CD4-positive, alpha-beta T cell (primary cell): ENCODE measurements at regions of chr7 and their contacts with region 1.

Region 1: DNA sequence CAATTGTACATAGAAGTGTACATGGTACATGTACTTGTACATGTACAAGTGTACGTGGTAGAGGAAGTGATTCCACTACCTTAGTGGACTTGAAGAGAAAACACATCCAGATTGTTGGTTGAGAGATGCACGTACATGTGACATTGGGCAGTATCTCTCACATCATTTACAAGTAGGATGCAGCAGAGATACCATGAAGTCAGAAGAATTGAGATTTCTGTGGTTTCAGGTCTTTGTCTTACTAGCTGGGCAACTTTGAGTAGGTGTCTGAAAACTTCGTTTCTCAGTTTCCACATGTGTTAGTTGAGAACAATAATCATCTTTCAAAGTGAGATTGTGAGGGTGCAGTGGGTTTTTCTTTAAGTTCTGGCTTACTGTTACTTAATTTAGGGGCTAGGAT is 21.5 kb downstream of the CLDN12 start:
- DNase-seq: no peak
- ATAC-seq: no peak
- H3K4me3 ChIP-seq: no peak overlapping the region
- H3K4me3 Mint-ChIP-seq: no peak overlapping the region
- H3K27ac ChIP-seq: no peak overlapping the region
- H3K27ac Mint-ChIP-seq: no peak overlapping the region
- H3K4me1 ChIP-seq: no peaks in the 10 kb centered on the region
- H3K4me1 Mint-ChIP-seq: no peaks in the 10 kb centered on the region
- H3K27me3 ChIP-seq: no peaks in the 10 kb centered on the region
- H3K27me3 Mint-ChIP-seq: peaks cover 6% of the 10 kb centered on the region
- CTCF ChIP-seq: no peak

Region 2: DNA sequence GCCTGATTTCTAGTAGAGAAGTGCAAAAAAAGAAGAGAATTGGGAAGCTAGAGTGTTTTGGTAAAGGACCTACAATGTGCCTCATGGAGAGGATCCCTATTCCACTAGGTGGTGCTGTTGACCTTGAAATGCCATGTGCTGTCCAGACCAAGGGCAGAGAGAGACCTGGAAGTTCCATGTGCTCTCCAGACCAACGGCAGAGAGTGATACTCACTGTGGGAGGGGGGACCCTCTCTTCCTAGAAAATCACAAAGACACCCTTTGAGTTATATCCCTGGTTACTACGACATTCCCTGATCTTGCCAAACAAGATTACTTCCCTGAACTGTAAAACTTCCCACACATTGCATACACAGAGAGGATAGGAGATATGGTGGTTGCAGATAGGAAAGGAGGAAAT is 1877.9 kb before region 1 on chr7:
- CTCF ChIA-PET with region 1: no interaction called
- POLR2A ChIA-PET with region 1: no interaction called
- intact Hi-C with region 1: loop called in 1 of 2 experiments (anchors 5 kb)
- DNase-seq: peak in 4 of 14 experiments; percentile 4 to 23 (median 10)
- ATAC-seq: no peak
- H3K4me3 ChIP-seq: no peak overlapping the region
- H3K4me3 Mint-ChIP-seq: no peak overlapping the region
- H3K27ac ChIP-seq: no peak overlapping the region
- H3K27ac Mint-ChIP-seq: no peak overlapping the region
- H3K4me1 ChIP-seq: no peaks in the 10 kb centered on the region
- H3K4me1 Mint-ChIP-seq: no peaks in the 10 kb centered on the region
- H3K27me3 ChIP-seq: no peaks in the 10 kb centered on the region
- H3K27me3 Mint-ChIP-seq: no peaks in the 10 kb centered on the region
- CTCF ChIP-seq: no peak

Region 3: DNA sequence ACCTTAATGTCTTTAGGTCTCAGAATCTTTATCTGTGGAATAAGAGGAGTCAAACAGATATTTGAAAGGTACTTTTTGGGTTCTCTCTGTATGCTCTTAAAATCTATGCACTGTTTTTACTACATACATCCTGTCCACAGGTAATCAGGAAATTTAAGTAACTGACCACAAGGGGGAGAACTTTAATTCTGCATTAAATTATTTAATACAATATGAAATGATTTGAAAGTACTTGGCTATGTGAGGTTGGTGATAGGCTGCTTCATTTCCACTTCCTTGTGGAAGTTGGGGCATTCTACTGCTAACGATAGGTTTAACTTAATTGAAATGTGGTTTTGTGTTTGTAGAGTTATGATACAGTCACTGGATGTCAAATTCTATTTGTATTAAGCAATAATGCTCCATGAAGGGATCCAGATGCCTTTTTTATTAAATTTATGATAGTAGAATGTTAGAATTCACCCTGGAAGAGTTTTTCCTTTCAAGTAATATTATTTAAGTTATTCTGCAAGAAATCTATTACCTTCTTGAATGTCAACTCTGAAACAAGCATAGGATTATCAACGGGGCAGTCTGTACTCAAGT is 1635.1 kb before region 1 on chr7:
- CTCF ChIA-PET with region 1: no interaction called
- POLR2A ChIA-PET with region 1: no interaction called
- intact Hi-C with region 1: loop called (anchors 2 kb)
- DNase-seq: peak in 3 of 14 experiments; percentile 18 to 30 (median 27)
- ATAC-seq: no peak
- H3K4me3 ChIP-seq: no peak overlapping the region
- H3K4me3 Mint-ChIP-seq: no peak overlapping the region
- H3K27ac ChIP-seq: no peak overlapping the region
- H3K27ac Mint-ChIP-seq: no peak overlapping the region
- H3K4me1 ChIP-seq: no peaks in the 10 kb centered on the region
- H3K4me1 Mint-ChIP-seq: no peaks in the 10 kb centered on the region
- H3K27me3 ChIP-seq: no peaks in the 10 kb centered on the region
- H3K27me3 Mint-ChIP-seq: no peaks in the 10 kb centered on the region
- CTCF ChIP-seq: peak; percentile 57

Region 4: GRCh38 chr7:90155206-90155605 is 269.5 kb before region 1 on chr7:
- CTCF ChIA-PET with region 1: interaction called, 33 read pairs
- POLR2A ChIA-PET with region 1: interaction called, 6 read pairs
- intact Hi-C with region 1: loop called (anchors 1 kb)
- DNase-seq: no peak
- ATAC-seq: no peak
- H3K4me3 ChIP-seq: no peak overlapping the region
- H3K4me3 Mint-ChIP-seq: no peak overlapping the region
- H3K27ac ChIP-seq: no peak overlapping the region
- H3K27ac Mint-ChIP-seq: no peak overlapping the region
- H3K4me1 ChIP-seq: peaks cover 9% of the 10 kb centered on the region
- H3K4me1 Mint-ChIP-seq: peaks cover 4% of the 10 kb centered on the region
- H3K27me3 ChIP-seq: peaks cover 0 to 7% of the 10 kb centered on the region in 2 experiments
- H3K27me3 Mint-ChIP-seq: peaks cover 47% of the 10 kb centered on the region
- CTCF ChIP-seq: no peak

Region 5: DNA sequence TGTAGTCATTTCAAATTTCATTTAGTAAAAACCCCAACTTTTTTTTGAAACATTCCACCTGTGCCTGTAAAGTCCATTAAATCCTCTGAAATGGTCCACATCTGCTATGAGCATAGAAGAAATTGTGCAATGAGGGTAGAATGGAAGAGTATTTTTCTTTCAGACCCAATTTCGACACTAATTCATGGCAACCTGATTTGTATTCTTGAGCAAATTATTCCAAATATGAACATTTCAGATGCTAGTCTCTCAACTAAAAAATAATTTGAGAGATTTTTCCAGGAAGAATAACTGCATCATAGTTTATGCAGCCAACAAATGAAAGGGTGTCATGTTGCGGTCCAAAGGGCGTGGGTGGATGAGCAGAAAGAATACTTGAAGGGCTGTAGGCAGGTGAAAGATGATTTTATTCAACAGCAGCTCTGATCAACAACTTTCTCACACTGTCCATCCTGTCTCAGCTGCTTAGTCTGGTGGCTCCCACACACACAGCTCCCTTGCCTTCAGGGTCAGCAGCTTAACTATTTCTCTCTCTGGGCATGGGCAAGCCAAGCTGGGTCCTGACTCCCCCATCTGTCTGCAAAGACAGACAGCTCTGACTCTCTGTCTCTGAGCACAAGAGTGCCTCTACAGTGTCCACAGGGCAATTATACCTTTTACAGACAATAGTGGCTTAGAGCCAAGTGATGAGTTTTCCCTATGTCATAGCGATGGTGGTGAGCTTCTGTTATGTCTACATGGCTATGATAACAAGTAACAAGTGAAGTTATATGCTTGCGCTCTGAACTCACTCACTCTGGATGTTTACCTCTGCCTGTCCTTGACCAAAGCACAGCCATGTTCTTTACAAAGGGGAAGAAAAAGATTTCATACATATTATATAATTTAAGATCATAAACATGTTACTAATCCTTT is 201.7 kb before region 1 on chr7:
- CTCF ChIA-PET with region 1: no interaction called
- POLR2A ChIA-PET with region 1: no interaction called
- intact Hi-C with region 1: no loop called
- DNase-seq: no peak
- ATAC-seq: no peak
- H3K4me3 ChIP-seq: no peak overlapping the region
- H3K4me3 Mint-ChIP-seq: no peak overlapping the region
- H3K27ac ChIP-seq: no peak overlapping the region
- H3K27ac Mint-ChIP-seq: no peak overlapping the region
- H3K4me1 ChIP-seq: no peaks in the 10 kb centered on the region
- H3K4me1 Mint-ChIP-seq: no peaks in the 10 kb centered on the region
- H3K27me3 ChIP-seq: peaks cover 0 to 23% of the 10 kb centered on the region in 2 experiments
- H3K27me3 Mint-ChIP-seq: peaks cover 63% of the 10 kb centered on the region
- CTCF ChIP-seq: no peak

Region 6: GRCh38 chr7:90312745-90313144 is 112.0 kb before region 1 on chr7:
- CTCF ChIA-PET with region 1: interaction called, 9 read pairs
- POLR2A ChIA-PET with region 1: interaction called, 4 read pairs
- intact Hi-C with region 1: loop called (anchors 1 to 5 kb)
- DNase-seq: peak in 3 of 14 experiments; percentile 5 to 19 (median 15)
- ATAC-seq: peak; percentile 34
- H3K4me3 ChIP-seq: no peak overlapping the region
- H3K4me3 Mint-ChIP-seq: no peak overlapping the region
- H3K27ac ChIP-seq: no peak overlapping the region
- H3K27ac Mint-ChIP-seq: no peak overlapping the region
- H3K4me1 ChIP-seq: no peaks in the 10 kb centered on the region
- H3K4me1 Mint-ChIP-seq: no peaks in the 10 kb centered on the region
- H3K27me3 ChIP-seq: peaks cover 0 to 6% of the 10 kb centered on the region in 2 experiments
- H3K27me3 Mint-ChIP-seq: peaks cover 48% of the 10 kb centered on the region
- CTCF ChIP-seq: no peak

Region 7: DNA sequence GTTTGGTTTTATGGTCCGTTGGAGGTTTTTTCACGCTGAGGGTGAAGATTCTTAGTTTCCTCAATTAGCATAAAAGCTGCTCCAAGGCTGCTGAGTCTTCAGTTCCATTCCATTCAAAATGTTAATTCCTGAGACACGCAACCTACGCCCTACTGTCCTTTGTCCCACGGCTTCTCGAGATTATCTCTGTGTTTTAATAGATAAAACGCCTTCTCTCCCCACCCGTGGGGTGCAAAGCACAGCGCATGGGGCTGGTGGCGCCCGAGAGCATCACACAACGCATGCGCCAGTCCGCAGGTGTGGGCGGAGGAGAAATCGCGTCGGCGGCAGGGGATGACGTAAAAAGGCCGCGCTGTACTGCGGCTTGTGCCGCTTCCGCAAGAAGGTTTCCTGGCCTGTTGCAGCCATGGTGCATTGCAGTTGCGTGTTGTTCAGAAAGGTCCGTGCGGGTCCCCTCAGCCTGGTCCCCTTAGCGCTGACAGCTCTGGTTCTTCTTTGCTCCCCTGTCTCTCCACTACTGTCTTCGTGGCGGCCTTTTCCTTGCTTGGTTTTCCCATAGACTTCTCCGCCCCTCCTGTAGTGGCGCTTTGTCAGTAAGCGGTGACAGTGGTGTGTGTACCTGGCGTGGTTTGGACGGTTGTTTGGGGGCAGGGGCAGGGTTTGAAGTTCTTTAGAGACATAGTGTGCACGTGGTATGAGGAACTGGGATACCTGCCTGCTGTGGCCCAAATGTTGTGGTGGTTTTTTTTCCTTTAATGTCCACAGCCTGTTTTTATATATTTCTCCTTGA is 78.2 kb before region 1 on chr7 and contains the start of gene GTPBP10:
- CTCF ChIA-PET with region 1: interaction called, 3 read pairs
- POLR2A ChIA-PET with region 1: no interaction called
- intact Hi-C with region 1: loop called in 1 of 2 experiments (anchors 1 kb)
- DNase-seq: peak; percentile 92 to 99 (median 93)
- ATAC-seq: peak; percentile 91
- H3K4me3 ChIP-seq: peak within 1 kb of the TSS; percentile 66
- H3K4me3 Mint-ChIP-seq: peak within 1 kb of the TSS; percentile 98
- H3K27ac ChIP-seq: peak within 1 kb of the TSS; percentile 81 to 86
- H3K27ac Mint-ChIP-seq: peak within 1 kb of the TSS; percentile 99
- H3K4me1 ChIP-seq: peaks cover 14% of the 10 kb centered on the region
- H3K4me1 Mint-ChIP-seq: peaks cover 61% of the 10 kb centered on the region
- H3K27me3 ChIP-seq: no peaks in the 10 kb centered on the region
- H3K27me3 Mint-ChIP-seq: no peaks in the 10 kb centered on the region
- CTCF ChIP-seq: peak; percentile 86
- total RNA-seq, gene GTPBP10: 11.8 to 13.7 TPM

Region 8: GRCh38 chr7:90445633-90446032 is 20.9 kb after region 1 on chr7:
- CTCF ChIA-PET with region 1: no interaction called
- POLR2A ChIA-PET with region 1: no interaction called
- intact Hi-C with region 1: no loop called
- DNase-seq: no peak
- ATAC-seq: no peak
- H3K4me3 ChIP-seq: no peak overlapping the region
- H3K4me3 Mint-ChIP-seq: no peak overlapping the region
- H3K27ac ChIP-seq: no peak overlapping the region
- H3K27ac Mint-ChIP-seq: no peak overlapping the region
- H3K4me1 ChIP-seq: no peaks in the 10 kb centered on the region
- H3K4me1 Mint-ChIP-seq: no peaks in the 10 kb centered on the region
- H3K27me3 ChIP-seq: no peaks in the 10 kb centered on the region
- H3K27me3 Mint-ChIP-seq: peaks cover 6% of the 10 kb centered on the region
- CTCF ChIP-seq: no peak

Region 9: DNA sequence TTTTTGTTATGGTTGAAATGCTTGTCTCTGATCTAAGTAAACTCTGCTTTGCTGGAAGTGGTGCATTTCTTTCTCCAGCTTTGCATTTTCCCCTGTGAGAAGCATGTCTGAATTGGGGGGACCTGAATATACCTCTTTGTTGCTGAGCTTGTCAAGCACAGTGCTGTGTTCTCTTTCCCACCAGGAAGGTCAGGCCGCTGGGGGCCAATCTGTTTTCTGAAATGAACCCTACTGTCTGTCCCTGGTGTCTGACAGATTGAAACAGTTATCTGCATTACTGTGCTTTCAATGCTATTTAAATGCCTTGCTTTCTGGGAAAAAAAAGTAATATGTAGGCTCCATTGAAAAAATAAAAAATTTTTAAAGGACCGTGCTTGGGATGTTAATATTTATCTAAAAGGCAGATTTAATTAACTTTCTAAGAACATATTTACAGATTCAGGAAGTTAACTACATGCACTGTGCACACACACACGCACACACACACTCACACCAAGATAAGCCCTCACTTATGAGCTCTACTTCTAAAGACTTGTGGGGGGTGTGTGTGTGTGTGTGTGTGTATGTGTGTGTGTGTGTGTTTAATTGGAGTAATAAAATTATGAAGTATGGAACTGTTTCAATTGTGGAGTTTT is 712.5 kb after region 1 on chr7:
- CTCF ChIA-PET with region 1: no interaction called
- POLR2A ChIA-PET with region 1: no interaction called
- intact Hi-C with region 1: no loop called
- DNase-seq: no peak
- ATAC-seq: no peak
- H3K4me3 ChIP-seq: no peak overlapping the region
- H3K4me3 Mint-ChIP-seq: no peak overlapping the region
- H3K27ac ChIP-seq: no peak overlapping the region
- H3K27ac Mint-ChIP-seq: no peak overlapping the region
- H3K4me1 ChIP-seq: no peaks in the 10 kb centered on the region
- H3K4me1 Mint-ChIP-seq: no peaks in the 10 kb centered on the region
- H3K27me3 ChIP-seq: no peaks in the 10 kb centered on the region
- H3K27me3 Mint-ChIP-seq: no peaks in the 10 kb centered on the region
- CTCF ChIP-seq: no peak